Esophagus squamous epithelium (tissue), 5 donors: ENCODE measurements at regions of chr17 and their contacts with region 1.

Region 1: GRCh38 chr17:48791128-48792032 is 25.6 kb downstream of the TTLL6 start:
- DNase-seq: no peak
- H3K4me3 ChIP-seq: no peak overlapping the region
- H3K27ac ChIP-seq: no peak overlapping the region
- H3K4me1 ChIP-seq: peaks cover 0 to 15% (median 0%) of the 10 kb centered on the region in 3 donors
- H3K27me3 ChIP-seq: peaks cover 0 to 99% (median 0%) of the 10 kb centered on the region in 4 donors
- CTCF ChIP-seq: peak; percentile 43 to 79 (median 68)
- POLR2A ChIP-seq: no peak

Region 2: DNA sequence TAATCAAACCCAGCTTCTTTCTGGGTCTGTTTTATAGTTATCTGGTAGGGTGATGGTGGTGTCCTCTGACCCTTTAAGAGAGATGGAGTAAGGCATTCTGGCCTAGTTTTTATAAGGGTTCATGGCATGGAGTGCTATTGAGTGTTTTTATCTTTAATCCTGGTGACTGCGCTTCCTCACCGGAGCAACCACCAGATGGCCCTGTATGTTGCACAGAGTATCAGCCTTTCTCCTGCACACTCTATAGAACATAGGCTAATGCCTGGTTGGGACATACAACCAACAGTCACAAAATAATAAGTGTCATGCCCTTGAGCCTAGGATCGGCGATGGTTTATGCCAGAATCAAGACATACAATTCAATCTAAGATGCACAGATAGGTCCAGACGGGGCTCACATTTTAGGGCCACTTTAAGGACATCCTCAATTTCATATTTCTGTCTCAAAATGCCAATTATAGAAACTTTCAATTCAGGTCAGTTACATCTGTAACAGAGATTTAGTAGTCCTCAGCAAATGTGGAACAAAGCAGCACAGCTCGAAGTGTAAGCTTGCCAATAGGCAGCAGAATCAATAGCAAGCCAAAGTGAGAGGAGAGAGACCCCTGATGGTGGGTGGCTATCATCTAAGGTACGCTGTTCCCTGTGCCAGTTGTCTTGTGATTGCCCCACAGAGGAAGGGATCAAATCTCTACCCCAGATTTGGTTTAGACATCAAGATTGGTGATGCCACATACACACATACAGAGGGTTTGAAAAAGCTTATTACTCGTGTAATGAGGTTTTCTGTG is 128.1 kb before region 1 on chr17:
- intact Hi-C with region 1: no loop called
- DNase-seq: no peak
- H3K4me3 ChIP-seq: no peak overlapping the region
- H3K27ac ChIP-seq: no peak overlapping the region
- H3K4me1 ChIP-seq: no peaks in the 10 kb centered on the region
- H3K27me3 ChIP-seq: peaks cover 0 to 94% (median 0%) of the 10 kb centered on the region in 4 donors
- CTCF ChIP-seq: peak in 1 of 6 experiments; percentile 10
- POLR2A ChIP-seq: no peak

Region 3: GRCh38 chr17:48724251-48725003 is 67.0 kb before region 1 on chr17:
- intact Hi-C with region 1: loop called (anchors 5 kb)
- DNase-seq: no peak
- H3K4me3 ChIP-seq: peak overlapping the region in 1 of 4 donors; percentile 26
- H3K27ac ChIP-seq: no peak overlapping the region
- H3K4me1 ChIP-seq: peaks cover 7 to 52% (median 36%) of the 10 kb centered on the region in 3 donors
- H3K27me3 ChIP-seq: peaks cover 70 to 100% (median 93%) of the 10 kb centered on the region in 4 donors
- CTCF ChIP-seq: peak; percentile 33 to 67 (median 59)
- POLR2A ChIP-seq: no peak